ENCODE measurements at regions of chr11 and their contacts with region 1.

Region 1: DNA sequence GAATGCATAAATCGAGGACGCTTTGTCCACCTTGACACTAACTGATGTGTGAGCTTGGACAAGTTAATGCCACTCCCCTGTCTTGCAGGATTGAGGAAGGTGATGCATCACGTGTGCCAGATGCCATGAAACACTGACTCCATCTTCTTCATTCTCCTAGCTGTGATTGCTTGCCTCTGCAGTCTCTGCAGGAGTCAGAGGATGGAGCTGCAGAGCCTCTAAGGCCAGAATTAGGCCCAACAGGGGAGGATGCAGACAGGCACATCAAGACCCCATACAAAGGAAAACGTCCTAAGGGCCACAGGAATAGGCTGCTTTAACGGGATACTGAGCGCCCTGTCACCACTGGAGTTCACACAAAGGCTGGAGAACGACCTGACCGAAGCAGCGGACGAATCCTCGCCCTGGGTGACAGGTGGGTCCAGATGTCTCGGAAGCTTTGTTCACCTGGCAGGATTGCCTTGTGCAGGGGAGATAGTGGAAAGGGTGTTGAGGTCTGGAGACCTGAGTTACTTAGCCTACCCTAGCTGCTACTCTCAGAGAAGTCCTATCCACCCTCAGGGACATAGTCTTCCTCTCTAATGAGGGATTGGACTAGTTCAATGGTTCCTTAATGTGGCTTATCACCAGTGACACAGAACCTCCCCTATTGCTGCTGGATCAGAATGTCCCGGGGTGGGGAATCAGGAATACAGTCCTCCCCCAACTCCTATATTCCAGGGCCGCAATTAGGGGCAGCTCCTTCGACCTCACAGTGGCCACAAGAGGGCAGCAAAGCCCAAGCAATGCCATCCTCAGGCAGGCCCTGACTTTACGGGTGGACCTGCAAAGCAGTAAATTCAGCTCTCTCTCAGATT is 32.4 kb downstream of the DBX1 start:
- DNase-seq: peak; percentile 80
- ATAC-seq: peak; percentile 68
- H3K4me3 Mint-ChIP-seq: no peak overlapping the region
- H3K27ac Mint-ChIP-seq: no peak overlapping the region
- H3K4me1 Mint-ChIP-seq: peaks cover 11% of the 10 kb centered on the region
- H3K27me3 Mint-ChIP-seq: peaks cover 13% of the 10 kb centered on the region

Region 2: GRCh38 chr11:19951558-19952115 is 176.3 kb before region 1 on chr11:
- CTCF ChIA-PET with region 1: interaction called, 10 read pairs
- POLR2A ChIA-PET with region 1: no interaction called
- DNase-seq: peak; percentile 22
- ATAC-seq: peak; percentile 49
- H3K4me3 Mint-ChIP-seq: peak overlapping the region; percentile 27
- H3K27ac Mint-ChIP-seq: no peak overlapping the region
- H3K4me1 Mint-ChIP-seq: peaks cover 6% of the 10 kb centered on the region
- H3K27me3 Mint-ChIP-seq: peaks cover 17% of the 10 kb centered on the region

Region 3: GRCh38 chr11:20243974-20244373 is 116.1 kb after region 1 on chr11:
- CTCF ChIA-PET with region 1: no interaction called
- POLR2A ChIA-PET with region 1: no interaction called
- DNase-seq: no peak
- ATAC-seq: no peak
- H3K4me3 Mint-ChIP-seq: no peak overlapping the region
- H3K27ac Mint-ChIP-seq: no peak overlapping the region
- H3K4me1 Mint-ChIP-seq: no peaks in the 10 kb centered on the region
- H3K27me3 Mint-ChIP-seq: peaks cover 7% of the 10 kb centered on the region

Region 4: GRCh38 chr11:20355221-20356219 is 227.6 kb after region 1 on chr11:
- CTCF ChIA-PET with region 1: interaction called, 99 read pairs
- POLR2A ChIA-PET with region 1: no interaction called
- DNase-seq: peak; percentile 59
- ATAC-seq: peak; percentile 78
- H3K4me3 Mint-ChIP-seq: no peak overlapping the region
- H3K27ac Mint-ChIP-seq: no peak overlapping the region
- H3K4me1 Mint-ChIP-seq: peaks cover 9% of the 10 kb centered on the region
- H3K27me3 Mint-ChIP-seq: peaks cover 9% of the 10 kb centered on the region

Region 5: GRCh38 chr11:20609727-20610707 is 482.1 kb after region 1 on chr11:
- CTCF ChIA-PET with region 1: interaction called, 17 read pairs
- POLR2A ChIA-PET with region 1: no interaction called
- DNase-seq: peak; percentile 70
- ATAC-seq: peak; percentile 85
- H3K4me3 Mint-ChIP-seq: peak overlapping the region; percentile 56
- H3K27ac Mint-ChIP-seq: no peak overlapping the region
- H3K4me1 Mint-ChIP-seq: peaks cover 10% of the 10 kb centered on the region
- H3K27me3 Mint-ChIP-seq: peaks cover 54% of the 10 kb centered on the region

Measured in activated CD8-positive, alpha-beta T cell treated with anti-CD3 and anti-CD28 coated beads, Interleukin-2, amount 10 ng/mL, durations not matched to agents 7 days and 5 days (primary cell).